ENCODE measurements at regions of chr5 and their contacts with region 1.

Region 1: DNA sequence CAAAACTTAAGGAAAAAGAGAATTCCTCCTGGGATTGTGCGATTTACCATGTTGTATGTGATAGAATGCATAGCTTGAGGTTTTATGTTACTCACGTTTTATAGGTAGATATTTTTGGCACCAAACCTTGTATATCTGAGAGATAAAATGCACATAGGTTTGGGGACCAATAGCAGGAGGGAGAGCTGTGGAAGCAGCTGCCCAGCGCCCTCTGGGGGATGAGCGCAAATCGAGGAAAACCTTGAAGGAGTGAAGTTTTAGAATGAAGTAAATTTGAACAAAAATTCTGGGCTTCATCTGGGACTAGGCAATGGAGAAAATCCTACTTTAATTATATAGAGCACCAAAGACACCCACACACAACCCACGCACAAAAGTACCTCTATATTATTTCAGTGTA is 197.0 kb downstream of the ADCY2 start:
- DNase-seq: no peak
- ATAC-seq: no peak; the same call in 2 of the 3 replicates
- H3K4me3 ChIP-seq: no peak overlapping the region
- H3K27ac ChIP-seq: no peak overlapping the region
- H3K4me1 ChIP-seq: no peaks in the 10 kb centered on the region
- H3K27me3 ChIP-seq: no peaks in the 10 kb centered on the region
- CTCF ChIP-seq: peak; percentile 35
- EP300 ChIP-seq: no peak
- POLR2A ChIP-seq: no peak
- RAD21 ChIP-seq: no peak

Region 2: DNA sequence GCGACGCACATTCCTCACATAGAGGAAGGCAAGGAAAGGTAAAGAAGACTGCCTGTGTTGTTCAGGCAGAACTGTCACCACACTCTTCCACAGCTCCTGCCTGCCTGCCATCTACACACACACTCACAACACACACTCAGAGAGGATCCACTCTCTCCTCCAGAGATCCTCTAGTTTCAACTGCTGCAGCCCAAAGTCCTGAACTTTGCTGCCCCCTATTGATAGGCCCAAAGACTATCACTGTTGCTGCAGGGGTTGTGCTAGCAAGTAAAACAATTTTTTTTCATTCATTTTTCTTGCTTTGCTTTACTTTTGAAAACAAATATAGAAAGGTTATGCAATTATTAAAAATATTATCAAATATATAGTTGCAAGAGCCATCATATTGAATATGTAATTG is 263.9 kb after region 1 on chr5:
- CTCF ChIA-PET with region 1: no interaction called
- POLR2A ChIA-PET with region 1: no interaction called
- in situ Hi-C with region 1: no loop called
- intact Hi-C with region 1: loop called (anchors 5 kb)
- DNase-seq: peak; percentile 38
- ATAC-seq: peak; percentile 91
- H3K4me3 ChIP-seq: no peak overlapping the region
- H3K27ac ChIP-seq: no peak overlapping the region
- H3K4me1 ChIP-seq: peaks cover 8% of the 10 kb centered on the region
- H3K27me3 ChIP-seq: no peaks in the 10 kb centered on the region
- CTCF ChIP-seq: peak; percentile 81
- EP300 ChIP-seq: no peak
- POLR2A ChIP-seq: no peak
- RAD21 ChIP-seq: no peak

Region 3: GRCh38 chr5:8577792-8578191 is 984.9 kb after region 1 on chr5:
- CTCF ChIA-PET with region 1: no interaction called
- POLR2A ChIA-PET with region 1: no interaction called
- in situ Hi-C with region 1: no loop called
- intact Hi-C with region 1: no loop called
- DNase-seq: no peak
- ATAC-seq: no peak
- H3K4me3 ChIP-seq: no peak overlapping the region
- H3K27ac ChIP-seq: no peak overlapping the region
- H3K4me1 ChIP-seq: no peaks in the 10 kb centered on the region
- H3K27me3 ChIP-seq: no peaks in the 10 kb centered on the region
- CTCF ChIP-seq: no peak
- EP300 ChIP-seq: no peak
- POLR2A ChIP-seq: no peak
- RAD21 ChIP-seq: no peak